Right cardiac atrium (tissue), 5 donors: ENCODE measurements at regions of chr1 and their contacts with region 1.

Region 1: DNA sequence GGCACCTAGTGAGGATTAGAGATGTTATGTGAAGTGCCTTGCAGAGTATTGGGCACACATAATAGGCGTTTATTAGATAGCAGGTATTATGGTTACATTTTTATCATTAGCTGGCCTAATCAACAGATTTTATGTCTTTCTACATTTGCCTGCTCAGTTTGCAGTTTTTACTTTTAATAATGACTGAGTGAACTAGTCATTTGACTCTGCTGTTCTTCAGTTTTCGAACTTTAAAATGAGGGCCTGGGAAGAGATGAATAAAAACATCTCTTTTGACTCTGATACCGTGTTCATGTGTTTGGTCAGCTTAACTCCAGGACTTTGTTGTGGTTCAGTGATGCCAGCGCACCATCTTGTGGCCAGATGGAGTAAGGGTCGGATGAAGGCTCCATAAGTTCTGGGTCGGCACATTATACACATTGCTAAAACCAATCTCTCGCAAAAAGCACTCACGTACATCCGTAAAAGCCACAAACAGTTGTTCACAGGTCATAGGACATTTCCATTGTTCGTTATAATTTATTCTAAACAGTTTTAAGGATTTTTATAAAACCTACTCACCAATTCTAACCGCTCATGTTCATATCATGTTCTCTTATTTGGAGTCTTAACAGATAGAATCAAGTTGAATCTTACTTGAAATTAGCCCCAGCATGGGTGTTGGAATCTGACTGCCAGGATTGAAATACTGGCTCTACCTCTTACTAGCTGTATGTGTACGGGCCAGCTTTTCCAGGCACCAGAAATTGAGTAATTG is 78.4 kb upstream of the GPR88 start:
- DNase-seq: peak; percentile 71 to 82 (median 81)
- ATAC-seq: peak; percentile 86 to 91
- H3K4me3 ChIP-seq: no peak overlapping the region
- H3K27ac ChIP-seq: no peak overlapping the region
- H3K4me1 ChIP-seq: no peaks in the 10 kb centered on the region
- H3K27me3 ChIP-seq: no peaks in the 10 kb centered on the region

Region 2: GRCh38 chr1:99808391-99809115 is 651.0 kb before region 1 on chr1:
- intact Hi-C with region 1: loop called (anchors 5 to 10 kb)
- DNase-seq: no peak
- ATAC-seq: peak; percentile 95 to 97
- H3K4me3 ChIP-seq: peak overlapping the region; percentile 22
- H3K27ac ChIP-seq: no peak overlapping the region
- H3K4me1 ChIP-seq: no peaks in the 10 kb centered on the region
- H3K27me3 ChIP-seq: no peaks in the 10 kb centered on the region

Region 3: GRCh38 chr1:100265931-100266740 is 193.4 kb before region 1 on chr1 and contains the start of gene RTCA:
- intact Hi-C with region 1: loop called in 1 of 4 experiments (anchors 10 kb)
- DNase-seq: peak; percentile 98 to 99 (median 99)
- ATAC-seq: peak; percentile 99
- H3K4me3 ChIP-seq: peak within 1 kb of the TSS; percentile 96
- H3K27ac ChIP-seq: peak within 1 kb of the TSS; percentile 81
- H3K4me1 ChIP-seq: no peaks in the 10 kb centered on the region
- H3K27me3 ChIP-seq: no peaks in the 10 kb centered on the region
- total RNA-seq, gene RTCA: 27.8 to 39.8 (median 34.7) TPM

Region 4: DNA sequence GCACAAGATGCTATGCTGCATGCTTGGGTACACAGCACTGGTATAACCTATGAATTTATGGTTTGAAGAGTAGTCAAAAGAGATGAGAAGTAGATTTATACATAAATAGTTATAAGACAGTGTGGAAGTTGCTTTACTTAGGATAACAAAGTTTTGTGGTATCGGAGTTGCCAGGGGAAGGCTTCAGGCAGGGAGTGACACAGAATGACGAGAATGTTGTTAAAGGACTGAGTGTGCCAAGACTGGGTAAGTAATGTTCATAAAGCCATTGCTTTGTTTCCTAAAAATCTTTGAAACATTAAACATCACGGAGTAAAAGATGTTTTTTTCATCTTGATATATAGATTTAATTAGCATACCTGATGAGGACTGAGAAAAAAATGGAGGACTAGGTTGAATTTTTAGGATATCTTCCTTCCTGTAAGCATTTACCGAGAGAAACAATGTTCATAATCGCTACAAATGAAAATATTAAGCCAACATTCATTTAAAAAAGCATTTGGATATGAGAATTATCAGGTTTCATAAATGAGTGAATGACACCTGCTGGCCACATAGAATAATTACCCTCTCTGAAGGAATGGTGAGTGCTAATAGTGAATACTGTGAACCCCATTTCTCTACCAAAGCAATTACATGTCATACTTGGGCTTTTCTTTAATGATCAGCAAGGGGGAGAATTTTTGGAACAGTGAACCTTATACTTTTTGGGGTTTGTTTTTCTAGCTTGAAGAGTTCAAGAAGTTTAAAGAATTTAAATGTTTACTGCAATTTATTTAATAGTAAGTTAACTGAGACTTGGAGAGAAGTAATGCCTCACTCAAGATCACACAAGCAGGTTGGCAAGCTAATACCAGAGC is 406.7 kb after region 1 on chr1:
- intact Hi-C with region 1: loop called (anchors 5 kb)
- DNase-seq: no peak
- ATAC-seq: peak; percentile 72 to 76
- H3K4me3 ChIP-seq: no peak overlapping the region
- H3K27ac ChIP-seq: no peak overlapping the region
- H3K4me1 ChIP-seq: no peaks in the 10 kb centered on the region
- H3K27me3 ChIP-seq: no peaks in the 10 kb centered on the region

Region 5: GRCh38 chr1:100902365-100902764 is 442.8 kb after region 1 on chr1:
- intact Hi-C with region 1: no loop called
- DNase-seq: no peak
- ATAC-seq: no peak
- H3K4me3 ChIP-seq: no peak overlapping the region
- H3K27ac ChIP-seq: no peak overlapping the region
- H3K4me1 ChIP-seq: peaks cover 1% of the 10 kb centered on the region
- H3K27me3 ChIP-seq: no peaks in the 10 kb centered on the region